Endothelial cell of umbilical vein (primary cell): ENCODE measurements at regions of chr2 and their contacts with region 1.

Region 1: GRCh38 chr2:28452534-28453081 is 43.3 kb upstream of the PLB1 start:
- DNase-seq: peak; percentile 58
- H3K4me3 ChIP-seq: no peak overlapping the region
- H3K27ac ChIP-seq: no peak overlapping the region
- H3K4me1 ChIP-seq: peaks cover 14% of the 10 kb centered on the region
- H3K27me3 ChIP-seq: no peaks in the 10 kb centered on the region
- CTCF ChIP-seq: peak; percentile 94 to 96
- POLR2A ChIP-seq: no peak

Region 2: GRCh38 chr2:27754138-27754588 is 698.4 kb before region 1 on chr2:
- CTCF ChIA-PET with region 1: interaction called, 20 read pairs
- POLR2A ChIA-PET with region 1: no interaction called
- dilution Hi-C with region 1: no loop called
- intact Hi-C with region 1: loop called (anchors 1 kb)
- DNase-seq: peak; percentile 81
- H3K4me3 ChIP-seq: no peak overlapping the region
- H3K27ac ChIP-seq: no peak overlapping the region
- H3K4me1 ChIP-seq: no peaks in the 10 kb centered on the region
- H3K27me3 ChIP-seq: no peaks in the 10 kb centered on the region
- CTCF ChIP-seq: peak; percentile 94 to 97
- POLR2A ChIP-seq: no peak

Region 3: DNA sequence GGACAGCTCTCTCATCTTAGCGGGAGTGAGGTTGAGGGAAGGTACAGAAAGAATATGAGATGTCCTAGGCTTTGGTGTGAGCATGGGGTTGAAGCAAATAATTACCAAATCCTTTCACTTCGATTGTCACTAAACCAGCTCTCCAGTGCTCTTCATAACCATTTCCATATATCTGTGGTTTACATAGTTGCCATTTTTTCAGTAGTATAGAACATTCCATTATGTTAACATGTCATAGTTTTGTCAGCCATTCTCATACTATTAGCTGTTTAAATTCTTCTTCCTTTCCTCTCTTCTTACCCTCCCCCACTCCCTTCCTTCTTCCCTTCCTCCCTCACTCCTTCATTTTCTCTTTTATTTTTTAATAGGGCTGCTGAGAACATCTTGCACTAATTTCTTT is 356.2 kb before region 1 on chr2:
- CTCF ChIA-PET with region 1: no interaction called
- POLR2A ChIA-PET with region 1: no interaction called
- dilution Hi-C with region 1: no loop called
- intact Hi-C with region 1: loop called (anchors 5 kb)
- DNase-seq: no peak
- H3K4me3 ChIP-seq: no peak overlapping the region
- H3K27ac ChIP-seq: no peak overlapping the region
- H3K4me1 ChIP-seq: peaks cover 15% of the 10 kb centered on the region
- H3K27me3 ChIP-seq: no peaks in the 10 kb centered on the region
- CTCF ChIP-seq: no peak
- POLR2A ChIP-seq: no peak

Region 4: DNA sequence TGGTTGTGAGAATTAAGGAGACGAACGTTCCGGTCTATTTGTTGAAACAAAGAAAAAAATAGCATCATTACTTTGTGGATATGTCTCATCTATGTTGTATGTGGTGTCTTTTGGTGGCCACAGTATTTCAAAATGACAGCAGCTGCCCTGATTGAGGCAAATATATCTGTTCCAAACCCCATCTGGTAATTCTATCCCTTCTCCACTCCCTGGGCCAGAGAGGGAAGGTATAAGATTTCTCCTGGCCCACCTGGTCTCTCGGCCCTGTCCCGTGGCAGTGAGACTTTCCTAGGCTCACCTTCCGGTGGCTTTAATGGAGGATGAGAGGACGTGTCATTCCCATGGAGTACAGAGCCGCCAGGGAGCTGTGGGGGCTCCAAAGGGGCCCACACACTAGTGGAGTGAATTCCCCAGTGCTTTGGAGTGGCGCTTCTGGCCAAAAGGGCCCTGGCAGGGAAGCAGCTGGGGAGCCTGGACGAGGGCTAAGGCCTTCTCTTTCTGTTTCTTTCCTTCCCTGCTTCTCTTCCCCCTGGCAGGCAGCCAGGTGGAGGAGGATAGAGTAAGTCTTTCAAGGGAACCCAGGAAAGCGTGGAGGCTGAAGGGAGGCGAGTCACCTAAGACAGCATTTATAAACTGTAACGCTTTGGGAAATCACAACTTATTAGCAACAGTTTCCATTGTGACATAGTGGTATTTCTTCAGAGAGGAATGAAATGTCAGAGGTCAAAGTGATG is 54.3 kb before region 1 on chr2:
- CTCF ChIA-PET with region 1: interaction called, 5 read pairs
- POLR2A ChIA-PET with region 1: interaction called, 3 read pairs
- dilution Hi-C with region 1: no loop called
- intact Hi-C with region 1: loop called (anchors 1 kb)
- DNase-seq: no peak
- H3K4me3 ChIP-seq: peak overlapping the region in 1 of 3 experiments; percentile 97
- H3K27ac ChIP-seq: peak overlapping the region; percentile 99
- H3K4me1 ChIP-seq: peaks cover 49% of the 10 kb centered on the region
- H3K27me3 ChIP-seq: no peaks in the 10 kb centered on the region
- CTCF ChIP-seq: no peak
- POLR2A ChIP-seq: no peak

Region 5: DNA sequence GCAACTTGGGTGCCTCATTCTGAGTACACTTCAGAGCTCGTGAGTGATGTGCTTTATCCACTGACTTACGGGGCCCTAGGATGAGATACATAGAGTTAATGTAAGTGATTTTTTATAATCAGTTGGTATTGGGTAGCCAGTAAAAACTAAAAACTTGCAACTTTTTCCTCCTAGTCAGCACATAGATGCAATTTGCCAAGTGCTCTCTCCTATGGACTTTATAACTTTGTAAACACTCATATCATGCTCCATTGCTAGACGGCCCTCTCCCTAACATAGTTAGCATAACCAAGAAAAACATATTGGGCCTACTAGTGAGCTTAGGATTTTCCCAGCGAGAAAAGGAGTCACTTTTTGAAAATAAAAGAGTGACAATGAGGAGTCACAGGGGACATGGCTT is 103.7 kb after region 1 on chr2:
- CTCF ChIA-PET with region 1: no interaction called
- POLR2A ChIA-PET with region 1: no interaction called
- dilution Hi-C with region 1: no loop called
- intact Hi-C with region 1: no loop called
- DNase-seq: no peak
- H3K4me3 ChIP-seq: no peak overlapping the region
- H3K27ac ChIP-seq: no peak overlapping the region
- H3K4me1 ChIP-seq: no peaks in the 10 kb centered on the region
- H3K27me3 ChIP-seq: no peaks in the 10 kb centered on the region
- CTCF ChIP-seq: no peak
- POLR2A ChIP-seq: no peak